Heart left ventricle (tissue), 16 donors: ENCODE measurements at regions of chr3 and their contacts with region 1.

Region 1: GRCh38 chr3:149969940-149970715 is 567 bp downstream of the PFN2 start:
- DNase-seq: peak; percentile 80 to 88 (median 82)
- ATAC-seq: peak in 3 of 4 donors; percentile 70 to 77 (median 76)
- H3K4me3 ChIP-seq: peak overlapping the region; percentile 62 to 93 (median 82)
- H3K27ac ChIP-seq: peak overlapping the region; percentile 73 to 97 (median 90)
- H3K4me1 ChIP-seq: peaks cover 0 to 47% (median 13%) of the 10 kb centered on the region in 12 donors
- H3K27me3 ChIP-seq: peaks cover 0 to 16% (median 0%) of the 10 kb centered on the region in 9 donors
- CTCF ChIP-seq: no peak
- POLR2A ChIP-seq: no peak

Region 2: DNA sequence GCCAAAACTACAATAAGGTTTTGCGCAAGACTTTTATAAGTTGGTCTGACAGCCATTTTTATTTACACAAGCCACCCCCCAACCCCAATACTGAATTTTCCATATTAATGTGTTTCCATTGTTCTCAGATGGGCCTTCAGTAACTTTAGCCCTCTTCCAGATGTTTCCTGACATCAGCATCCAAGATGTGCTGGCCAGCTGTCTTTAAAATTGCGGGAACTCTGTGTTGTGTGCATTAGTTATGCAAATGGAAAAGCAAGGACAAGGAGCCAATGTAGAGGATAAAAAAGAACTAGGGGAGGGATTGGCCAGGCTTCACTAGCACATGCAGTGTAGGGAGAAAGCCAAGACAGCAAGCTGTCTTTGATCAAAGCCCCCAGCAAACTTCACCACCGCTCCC is 263.2 kb before region 1 on chr3:
- intact Hi-C with region 1: no loop called
- DNase-seq: peak in 1 of 5 donors; percentile 11
- ATAC-seq: peak in 2 of 4 donors; percentile 9 to 82
- H3K4me3 ChIP-seq: no peak overlapping the region
- H3K27ac ChIP-seq: peak overlapping the region in 6 of 12 donors; percentile 2 to 50 (median 23)
- H3K4me1 ChIP-seq: peaks cover 0 to 9% (median 0%) of the 10 kb centered on the region in 12 donors
- H3K27me3 ChIP-seq: no peaks in the 10 kb centered on the region
- CTCF ChIP-seq: no peak
- POLR2A ChIP-seq: no peak

Region 3: GRCh38 chr3:149879872-149880271 is 90.3 kb before region 1 on chr3:
- intact Hi-C with region 1: loop called in 1 of 10 experiments (anchors 5 kb)
- DNase-seq: peak in 4 of 5 donors; percentile 29 to 68 (median 58)
- ATAC-seq: peak; percentile 70 to 86 (median 80)
- H3K4me3 ChIP-seq: no peak overlapping the region
- H3K27ac ChIP-seq: no peak overlapping the region
- H3K4me1 ChIP-seq: peaks cover 0 to 15% (median 0%) of the 10 kb centered on the region in 12 donors
- H3K27me3 ChIP-seq: no peaks in the 10 kb centered on the region
- CTCF ChIP-seq: peak; percentile 37 to 67 (median 58)
- POLR2A ChIP-seq: no peak

Region 4: GRCh38 chr3:150079029-150079739 is 109.1 kb after region 1 on chr3:
- intact Hi-C with region 1: loop called in 1 of 10 experiments (anchors 10 kb)
- DNase-seq: no peak
- ATAC-seq: peak in 3 of 4 donors; percentile 22 to 59 (median 26)
- H3K4me3 ChIP-seq: no peak overlapping the region
- H3K27ac ChIP-seq: peak overlapping the region in 8 of 12 donors; percentile 4 to 55 (median 36)
- H3K4me1 ChIP-seq: peaks cover 0 to 33% (median 13%) of the 10 kb centered on the region in 12 donors
- H3K27me3 ChIP-seq: no peaks in the 10 kb centered on the region
- CTCF ChIP-seq: no peak
- POLR2A ChIP-seq: no peak

Region 5: DNA sequence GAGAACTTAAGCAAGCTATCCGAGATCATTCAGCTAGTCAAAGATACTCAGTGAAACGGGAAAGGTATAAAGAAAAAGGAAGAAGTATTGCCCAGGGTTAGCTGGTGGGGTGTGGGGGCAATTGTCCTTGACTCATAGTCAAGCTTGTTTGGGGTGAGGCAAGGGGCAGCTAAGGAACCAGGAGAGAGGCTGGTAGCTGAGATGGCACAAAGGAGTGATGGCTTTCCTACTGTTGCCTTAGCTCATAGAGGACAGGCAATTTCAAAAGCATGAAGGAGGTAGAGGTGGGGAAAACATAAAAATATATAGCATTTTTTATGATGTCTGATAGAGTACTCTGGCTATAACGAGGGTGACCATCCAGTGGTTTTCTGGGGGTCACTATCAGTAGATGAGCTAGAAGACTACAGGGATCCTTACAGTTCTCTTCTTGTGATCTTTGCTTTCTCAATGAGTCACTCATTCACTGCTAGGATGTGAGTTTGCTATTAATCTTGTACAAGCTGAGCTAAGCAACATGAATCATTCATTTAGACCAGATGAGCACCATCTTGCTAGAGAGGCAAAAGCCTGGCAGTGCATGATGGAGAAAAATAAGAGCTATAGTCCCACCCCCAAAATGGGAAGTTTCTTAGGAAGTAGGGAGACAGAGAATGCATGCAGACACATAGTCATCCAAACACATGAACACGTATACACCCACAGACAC is 207.7 kb after region 1 on chr3:
- intact Hi-C with region 1: loop called in 2 of 10 experiments (anchors 2 kb)
- DNase-seq: no peak
- ATAC-seq: no peak
- H3K4me3 ChIP-seq: no peak overlapping the region
- H3K27ac ChIP-seq: no peak overlapping the region
- H3K4me1 ChIP-seq: no peaks in the 10 kb centered on the region
- H3K27me3 ChIP-seq: no peaks in the 10 kb centered on the region
- CTCF ChIP-seq: no peak
- POLR2A ChIP-seq: no peak

Region 6: GRCh38 chr3:150216041-150216811 is 246.1 kb after region 1 on chr3:
- intact Hi-C with region 1: loop called in 6 of 10 experiments (anchors 2 to 10 kb)
- DNase-seq: peak; percentile 52 to 73 (median 64)
- ATAC-seq: peak; percentile 74 to 97 (median 94)
- H3K4me3 ChIP-seq: no peak overlapping the region
- H3K27ac ChIP-seq: peak overlapping the region in 7 of 12 donors; percentile 1 to 62 (median 38)
- H3K4me1 ChIP-seq: peaks cover 0 to 21% (median 15%) of the 10 kb centered on the region in 12 donors
- H3K27me3 ChIP-seq: peaks cover 0 to 7% (median 0%) of the 10 kb centered on the region in 9 donors
- CTCF ChIP-seq: no peak
- POLR2A ChIP-seq: no peak